Dorsolateral prefrontal cortex (tissue), 120 donors: ENCODE measurements at regions of chr11 and their contacts with region 1.

Region 1: GRCh38 chr11:35478471-35479091 is 46.8 kb downstream of the PAMR1 start:
- DNase-seq: peak in 8 of 10 donors; percentile 8 to 77 (median 52)
- H3K4me3 ChIP-seq: peak overlapping the region in 4 of 59 donors; percentile 25 to 32 (median 26)
- H3K27ac ChIP-seq: peak overlapping the region in 34 of 59 donors; percentile 10 to 81 (median 60)
- H3K27me3 ChIP-seq: peaks cover 0 to 6% (median 0%) of the 10 kb centered on the region in 45 donors
- CTCF ChIP-seq: no peak

Region 2: DNA sequence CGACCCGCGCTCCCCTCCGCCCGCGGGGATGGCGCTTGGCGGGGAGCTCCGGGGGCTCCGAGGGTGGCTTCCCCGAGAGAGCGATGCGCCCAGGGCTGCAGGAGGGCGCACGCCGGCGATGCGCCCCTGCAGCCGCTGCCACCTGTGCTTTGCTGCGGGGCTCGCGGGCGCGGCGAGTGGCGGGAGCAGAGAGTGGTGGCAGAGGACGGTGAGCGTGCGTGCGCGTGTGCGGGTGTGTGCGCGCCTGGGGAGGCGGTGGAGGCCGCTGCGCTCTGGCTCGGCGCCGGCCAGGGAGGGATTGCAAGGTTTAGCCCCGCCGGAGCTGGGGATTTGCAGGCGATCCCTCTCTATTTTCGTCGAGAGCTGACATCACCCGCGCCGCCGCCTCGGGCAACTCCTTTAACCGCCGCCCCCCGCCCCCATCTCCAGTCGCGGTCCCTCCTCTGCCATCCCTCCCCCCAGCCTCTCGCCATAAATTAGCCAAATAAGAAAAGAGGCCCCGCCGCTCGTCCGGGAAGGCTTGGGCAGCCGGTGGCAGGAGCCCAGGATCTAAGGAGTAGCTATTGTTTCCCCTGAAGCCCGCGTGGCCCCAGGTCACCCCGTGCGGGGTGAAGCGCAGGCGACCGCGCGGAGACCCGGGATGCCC is 59.3 kb before region 1 on chr11 and contains the start of gene SLC1A2:
- intact Hi-C with region 1: loop called in 1 of 2 experiments (anchors 2 kb)
- DNase-seq: peak in 9 of 10 donors; percentile 37 to 80 (median 77)
- H3K4me3 ChIP-seq: peak within 1 kb of the TSS; percentile 45 to 78 (median 67)
- H3K27ac ChIP-seq: peak within 1 kb of the TSS in 57 of 59 donors; percentile 33 to 94 (median 82)
- H3K27me3 ChIP-seq: peaks cover 0 to 59% (median 7%) of the 10 kb centered on the region in 45 donors
- CTCF ChIP-seq: no peak
- total RNA-seq, gene SLC1A2: 500 to 4,588 (median 1,344) TPM